ENCODE measurements at regions of chr5 and their contacts with region 1.

Region 1: GRCh38 chr5:7856855-7857254 is 5.9 kb upstream of the CFAP90 start:
- DNase-seq: peak in 1 of 2 experiments; percentile 56
- H3K4me3 ChIP-seq: no peak overlapping the region
- H3K27ac ChIP-seq: no peak overlapping the region
- H3K4me1 ChIP-seq: no peaks in the 10 kb centered on the region
- H3K27me3 ChIP-seq: peaks cover 0 to under 1% (median 0%) of the 10 kb centered on the region in 4 experiments; a peak in 1 of 7 replicates
- CTCF ChIP-seq: peak; percentile 48 to 86 (median 86)
- EP300 ChIP-seq: no peak
- POLR2A ChIP-seq: no peak
- RAD21 ChIP-seq: peak; percentile 94 to 95

Region 2: GRCh38 chr5:7876867-7877266 is 20.0 kb after region 1 on chr5:
- CTCF ChIA-PET with region 1: interaction called, 12 read pairs
- POLR2A ChIA-PET with region 1: no interaction called
- DNase-seq: no peak
- H3K4me3 ChIP-seq: no peak overlapping the region
- H3K27ac ChIP-seq: no peak overlapping the region
- H3K4me1 ChIP-seq: no peaks in the 10 kb centered on the region
- H3K27me3 ChIP-seq: no peaks in the 10 kb centered on the region
- CTCF ChIP-seq: no peak
- EP300 ChIP-seq: no peak
- POLR2A ChIP-seq: no peak
- RAD21 ChIP-seq: no peak